WTC11 (cell line): ENCODE measurements at regions of chr9 and their contacts with region 1.

Region 1: DNA sequence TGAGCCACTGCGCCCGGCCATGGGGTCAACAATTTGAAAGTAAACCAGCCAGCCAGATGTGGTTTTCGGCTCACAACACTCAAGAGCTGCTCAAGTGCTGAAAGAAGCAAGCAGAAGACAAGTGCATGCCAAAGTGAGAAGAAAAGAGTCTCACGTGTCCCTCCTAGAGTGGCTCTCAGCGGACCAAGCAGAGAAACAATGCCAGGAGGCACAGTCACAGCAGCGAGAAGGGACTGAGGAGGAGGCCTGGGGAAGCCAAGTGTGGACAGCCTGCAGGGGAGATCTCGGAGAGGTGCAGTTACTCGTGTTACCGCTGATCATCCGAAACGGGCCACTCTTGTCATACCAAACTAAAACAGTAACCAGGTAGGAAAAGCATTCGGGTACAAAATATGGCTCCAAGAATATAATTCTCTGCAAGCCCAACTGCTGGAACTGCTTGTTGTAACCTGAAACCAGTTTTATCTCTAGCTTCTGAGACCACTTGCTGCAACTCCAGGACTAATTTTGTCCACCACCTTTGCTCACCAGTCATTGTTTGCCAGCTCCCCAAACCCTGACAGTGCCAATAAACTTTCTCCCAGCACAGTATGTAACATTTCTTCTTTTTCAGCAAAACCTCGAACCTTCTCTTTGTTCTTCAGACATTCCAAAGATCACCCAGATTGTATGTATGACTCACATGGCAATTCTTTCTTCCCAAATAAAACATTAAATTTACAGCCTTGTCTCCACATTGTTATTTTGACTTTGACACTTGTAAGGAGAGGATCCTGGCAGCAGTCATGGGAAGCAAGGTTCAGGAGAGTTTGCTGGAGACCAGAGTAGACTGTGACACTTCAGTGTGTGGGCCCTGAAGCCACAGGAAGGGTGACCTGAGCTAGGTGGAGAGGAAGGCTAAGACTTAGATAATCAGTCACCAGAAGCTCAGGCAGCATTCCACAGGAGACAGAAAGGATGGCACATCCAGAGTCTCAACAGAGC is 6.3 kb downstream of the SLC35D2 start:
- DNase-seq: no peak
- ATAC-seq: no peak
- H3K4me3 Mint-ChIP-seq: no peak overlapping the region
- H3K27ac Mint-ChIP-seq: peak overlapping the region; percentile 44; the same call in 1 of the 2 replicates
- H3K4me1 Mint-ChIP-seq: peaks cover 19% of the 10 kb centered on the region
- H3K27me3 Mint-ChIP-seq: no peaks in the 10 kb centered on the region; the same call in 1 of the 2 replicates
- CTCF ChIP-seq: no peak

Region 2: DNA sequence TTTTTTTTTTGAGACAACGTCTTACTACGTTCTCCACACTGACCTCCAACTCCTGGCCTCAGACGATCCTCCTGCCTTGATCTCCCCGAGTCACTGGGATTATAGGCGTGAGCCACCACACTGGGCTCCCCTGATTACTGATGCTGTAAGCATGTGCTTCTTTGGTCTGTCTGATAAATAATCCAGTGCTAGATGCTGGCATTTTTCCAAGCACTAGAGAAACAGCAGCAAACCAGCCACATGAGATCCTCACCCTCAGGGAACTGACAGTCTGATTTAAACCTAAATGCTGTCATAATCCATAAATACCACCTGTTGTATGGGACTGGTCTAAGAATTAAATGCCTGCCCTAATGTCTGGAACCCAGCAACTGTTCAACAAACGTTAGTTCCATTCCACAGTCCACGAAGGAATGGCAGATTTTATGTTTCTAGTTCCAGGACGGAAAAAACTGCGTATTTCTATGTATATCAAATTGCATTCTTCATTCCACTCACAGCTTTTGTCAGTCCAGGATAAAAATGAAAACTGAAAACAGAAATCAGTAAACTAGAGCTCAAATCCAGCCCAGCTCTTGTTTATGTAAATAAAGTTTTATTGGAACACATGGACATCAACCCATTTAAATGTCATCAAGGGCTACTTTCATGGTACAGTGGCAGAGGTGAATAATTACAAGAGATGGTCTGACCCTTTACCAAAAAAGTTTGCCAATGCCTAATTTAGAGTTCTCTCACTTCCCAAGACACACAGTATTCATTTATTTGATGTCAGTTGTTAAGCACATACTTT is 13.8 kb before region 1 on chr9:
- CTCF ChIA-PET with region 1: no interaction called
- POLR2A ChIA-PET with region 1: interaction called, 12 read pairs
- DNase-seq: no peak
- ATAC-seq: no peak
- H3K4me3 Mint-ChIP-seq: no peak overlapping the region
- H3K27ac Mint-ChIP-seq: no peak overlapping the region
- H3K4me1 Mint-ChIP-seq: no peaks in the 10 kb centered on the region
- H3K27me3 Mint-ChIP-seq: no peaks in the 10 kb centered on the region
- CTCF ChIP-seq: no peak

Region 3: DNA sequence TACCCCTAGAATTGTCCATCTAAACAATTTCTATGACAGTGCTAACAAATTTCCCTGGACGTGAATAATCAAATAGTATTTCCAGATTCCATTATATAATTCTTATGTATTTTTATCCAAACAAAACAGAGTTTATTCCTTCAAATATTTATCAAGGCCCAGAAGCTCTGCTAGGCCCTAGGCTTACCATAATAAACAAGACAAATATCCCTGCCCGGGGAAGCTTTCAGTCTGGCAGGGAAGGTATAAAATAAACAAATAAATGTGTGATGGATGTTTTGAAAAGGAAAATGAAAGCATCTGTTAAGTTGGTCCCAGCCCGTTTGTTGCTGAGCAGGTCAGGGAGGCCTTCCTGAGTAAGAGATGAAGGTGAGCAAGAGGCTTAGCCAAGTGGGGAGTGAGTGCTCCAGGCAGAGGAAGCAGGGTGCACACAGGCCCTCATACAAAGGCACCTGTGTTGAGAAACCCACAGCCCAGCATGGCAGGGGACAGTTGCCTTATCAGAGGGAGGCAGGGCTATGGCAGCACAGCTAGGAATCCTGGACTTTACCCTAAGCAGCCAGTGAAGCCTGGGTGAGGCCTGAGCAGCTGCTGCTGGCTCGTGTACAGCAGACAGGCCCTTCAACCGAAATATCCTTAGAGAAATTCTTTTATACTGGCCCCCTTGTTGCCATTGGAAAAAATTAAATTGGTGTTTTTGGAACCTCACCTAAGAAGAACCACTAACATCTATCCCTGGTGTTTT is 14.0 kb after region 1 on chr9:
- CTCF ChIA-PET with region 1: no interaction called
- POLR2A ChIA-PET with region 1: no interaction called
- DNase-seq: no peak
- ATAC-seq: no peak
- H3K4me3 Mint-ChIP-seq: no peak overlapping the region
- H3K27ac Mint-ChIP-seq: no peak overlapping the region
- H3K4me1 Mint-ChIP-seq: peaks cover 22% of the 10 kb centered on the region
- H3K27me3 Mint-ChIP-seq: no peaks in the 10 kb centered on the region
- CTCF ChIP-seq: no peak